ENCODE measurements at regions of chr1 and their contacts with region 1.

Region 1: GRCh38 chr1:222792744-222793143 is 22.1 kb upstream of the DISP1 start:
- DNase-seq: peak in 2 of 9 experiments; percentile 27 to 49
- ATAC-seq: no peak
- H3K4me3 ChIP-seq: no peak overlapping the region
- H3K4me3 Mint-ChIP-seq: no peak overlapping the region
- H3K27ac ChIP-seq: no peak overlapping the region
- H3K27ac Mint-ChIP-seq: no peak overlapping the region
- H3K4me1 ChIP-seq: no peaks in the 10 kb centered on the region
- H3K4me1 Mint-ChIP-seq: no peaks in the 10 kb centered on the region
- H3K27me3 ChIP-seq: no peaks in the 10 kb centered on the region
- H3K27me3 Mint-ChIP-seq: no peaks in the 10 kb centered on the region
- CTCF ChIP-seq: peak; percentile 62

Region 2: DNA sequence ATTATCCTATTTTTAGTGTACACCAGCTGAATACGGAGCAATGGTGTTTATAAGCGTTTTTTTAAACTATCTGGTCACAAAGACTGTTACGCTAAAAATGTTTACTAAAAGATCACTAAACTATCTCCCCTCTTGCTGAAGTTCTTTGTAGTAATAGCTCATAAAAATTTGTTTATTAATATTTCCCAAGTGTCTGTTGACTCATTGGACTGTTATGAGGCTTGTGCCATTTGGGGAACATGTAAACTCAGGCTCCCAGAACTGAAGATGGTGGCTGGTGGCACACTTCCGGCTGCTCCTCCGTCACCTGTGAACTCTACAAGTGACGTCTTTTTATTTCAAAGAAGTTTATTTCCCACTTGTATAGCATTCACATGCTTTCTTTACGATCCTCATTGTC is 126.8 kb before region 1 on chr1:
- CTCF ChIA-PET with region 1: no interaction called
- POLR2A ChIA-PET with region 1: no interaction called
- intact Hi-C with region 1: no loop called
- DNase-seq: no peak
- ATAC-seq: no peak
- H3K4me3 ChIP-seq: no peak overlapping the region
- H3K4me3 Mint-ChIP-seq: no peak overlapping the region
- H3K27ac ChIP-seq: no peak overlapping the region
- H3K27ac Mint-ChIP-seq: no peak overlapping the region
- H3K4me1 ChIP-seq: peaks cover 18% of the 10 kb centered on the region
- H3K4me1 Mint-ChIP-seq: peaks cover 21% of the 10 kb centered on the region
- H3K27me3 ChIP-seq: no peaks in the 10 kb centered on the region
- H3K27me3 Mint-ChIP-seq: no peaks in the 10 kb centered on the region
- CTCF ChIP-seq: no peak

Region 3: GRCh38 chr1:222706815-222707214 is 85.9 kb before region 1 on chr1:
- CTCF ChIA-PET with region 1: no interaction called
- POLR2A ChIA-PET with region 1: no interaction called
- intact Hi-C with region 1: no loop called
- DNase-seq: no peak
- ATAC-seq: no peak
- H3K4me3 ChIP-seq: no peak overlapping the region
- H3K4me3 Mint-ChIP-seq: no peak overlapping the region
- H3K27ac ChIP-seq: no peak overlapping the region
- H3K27ac Mint-ChIP-seq: no peak overlapping the region
- H3K4me1 ChIP-seq: peaks cover 34% of the 10 kb centered on the region
- H3K4me1 Mint-ChIP-seq: peaks cover 65% of the 10 kb centered on the region
- H3K27me3 ChIP-seq: no peaks in the 10 kb centered on the region
- H3K27me3 Mint-ChIP-seq: no peaks in the 10 kb centered on the region
- CTCF ChIP-seq: no peak

Region 4: DNA sequence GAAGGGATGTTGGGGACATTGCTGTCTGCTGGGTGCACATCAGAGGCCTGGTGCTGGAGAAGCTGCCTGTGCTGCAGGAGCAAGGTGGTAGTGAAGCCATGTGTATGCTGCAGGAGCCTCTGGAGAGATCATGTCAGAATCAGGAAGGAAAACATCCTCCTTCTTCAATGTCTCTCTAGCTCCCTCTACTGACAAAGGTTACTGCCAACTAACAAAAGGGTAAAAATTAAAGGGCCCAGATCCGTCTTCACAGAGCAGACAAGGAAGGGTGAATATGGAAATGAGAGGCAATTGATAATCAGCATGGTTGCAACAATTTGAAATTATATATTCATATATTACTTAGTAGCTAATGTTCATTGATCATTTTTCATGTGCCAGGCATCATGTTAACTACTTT is 23.6 kb before region 1 on chr1:
- CTCF ChIA-PET with region 1: no interaction called
- POLR2A ChIA-PET with region 1: no interaction called
- intact Hi-C with region 1: no loop called
- DNase-seq: no peak
- ATAC-seq: no peak
- H3K4me3 ChIP-seq: no peak overlapping the region
- H3K4me3 Mint-ChIP-seq: no peak overlapping the region
- H3K27ac ChIP-seq: no peak overlapping the region
- H3K27ac Mint-ChIP-seq: no peak overlapping the region
- H3K4me1 ChIP-seq: peaks cover 8% of the 10 kb centered on the region
- H3K4me1 Mint-ChIP-seq: peaks cover 14% of the 10 kb centered on the region
- H3K27me3 ChIP-seq: no peaks in the 10 kb centered on the region
- H3K27me3 Mint-ChIP-seq: no peaks in the 10 kb centered on the region
- CTCF ChIP-seq: no peak

Region 5: GRCh38 chr1:222987674-222988076 is 194.9 kb after region 1 on chr1:
- CTCF ChIA-PET with region 1: no interaction called
- POLR2A ChIA-PET with region 1: interaction called, 3 read pairs
- intact Hi-C with region 1: loop called in 1 of 2 experiments (anchors 10 kb)
- DNase-seq: no peak
- ATAC-seq: no peak
- H3K4me3 ChIP-seq: no peak overlapping the region
- H3K4me3 Mint-ChIP-seq: no peak overlapping the region
- H3K27ac ChIP-seq: no peak overlapping the region
- H3K27ac Mint-ChIP-seq: no peak overlapping the region
- H3K4me1 ChIP-seq: no peaks in the 10 kb centered on the region
- H3K4me1 Mint-ChIP-seq: peaks cover 8% of the 10 kb centered on the region
- H3K27me3 ChIP-seq: no peaks in the 10 kb centered on the region
- H3K27me3 Mint-ChIP-seq: no peaks in the 10 kb centered on the region
- CTCF ChIP-seq: no peak

Region 6: DNA sequence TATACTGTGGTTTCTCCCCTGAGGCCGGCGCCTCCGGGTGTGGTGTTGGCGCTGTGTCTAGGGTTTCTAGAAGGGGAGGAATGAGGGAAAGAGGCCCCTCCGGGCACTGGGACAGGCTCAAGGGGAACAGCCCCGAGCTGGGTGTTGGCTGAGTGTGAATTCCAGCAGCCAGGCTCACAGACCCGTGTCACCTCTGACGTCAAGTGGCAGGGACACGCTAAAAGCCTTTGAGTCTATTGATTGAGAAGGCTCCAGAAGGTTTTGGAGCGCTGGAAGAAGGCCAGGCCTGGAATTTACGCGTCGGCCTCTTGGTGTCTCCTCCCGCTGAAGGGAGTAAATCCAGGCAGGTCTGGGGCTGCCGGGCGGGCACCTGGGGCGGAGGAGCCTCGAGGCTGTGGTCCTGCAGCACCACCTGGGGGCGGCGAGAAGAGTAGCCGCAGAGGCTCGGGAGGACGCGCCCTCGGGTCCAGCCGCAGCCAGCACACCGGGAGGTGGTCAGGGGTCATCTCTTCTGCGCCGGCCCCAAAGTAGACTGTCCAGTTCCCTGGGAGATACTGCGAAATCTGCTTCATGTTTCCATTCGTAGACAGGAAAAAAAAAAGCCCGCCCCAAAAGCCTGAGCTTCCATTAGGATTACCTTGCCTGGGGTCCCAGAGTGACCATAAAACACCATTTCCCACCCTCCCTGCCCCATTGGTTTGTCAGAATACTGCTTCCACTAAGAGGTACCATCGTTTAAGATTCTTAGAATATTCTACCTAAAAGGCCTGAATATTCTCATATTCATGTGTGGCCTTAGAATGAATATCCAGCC is 288.6 kb after region 1 on chr1:
- CTCF ChIA-PET with region 1: interaction called, 4 read pairs
- POLR2A ChIA-PET with region 1: no interaction called
- intact Hi-C with region 1: loop called (anchors 1 kb)
- DNase-seq: peak; percentile 45 to 82 (median 70)
- ATAC-seq: peak; percentile 97
- H3K4me3 ChIP-seq: peak overlapping the region; percentile 45
- H3K4me3 Mint-ChIP-seq: peak overlapping the region; percentile 68
- H3K27ac ChIP-seq: peak overlapping the region in 1 of 2 experiments; percentile 16
- H3K27ac Mint-ChIP-seq: peak overlapping the region; percentile 41
- H3K4me1 ChIP-seq: peaks cover 4% of the 10 kb centered on the region
- H3K4me1 Mint-ChIP-seq: no peaks in the 10 kb centered on the region
- H3K27me3 ChIP-seq: peaks cover 0 to 3% of the 10 kb centered on the region in 2 experiments
- H3K27me3 Mint-ChIP-seq: peaks cover 2% of the 10 kb centered on the region
- CTCF ChIP-seq: peak; percentile 66

Region 7: GRCh38 chr1:223088713-223089240 is 296.0 kb after region 1 on chr1:
- CTCF ChIA-PET with region 1: interaction called, 14 read pairs
- POLR2A ChIA-PET with region 1: no interaction called
- intact Hi-C with region 1: no loop called
- DNase-seq: no peak
- ATAC-seq: no peak
- H3K4me3 ChIP-seq: no peak overlapping the region
- H3K4me3 Mint-ChIP-seq: no peak overlapping the region
- H3K27ac ChIP-seq: no peak overlapping the region
- H3K27ac Mint-ChIP-seq: no peak overlapping the region
- H3K4me1 ChIP-seq: peaks cover 6% of the 10 kb centered on the region
- H3K4me1 Mint-ChIP-seq: peaks cover 11% of the 10 kb centered on the region
- H3K27me3 ChIP-seq: no peaks in the 10 kb centered on the region
- H3K27me3 Mint-ChIP-seq: no peaks in the 10 kb centered on the region
- CTCF ChIP-seq: no peak

Region 8: DNA sequence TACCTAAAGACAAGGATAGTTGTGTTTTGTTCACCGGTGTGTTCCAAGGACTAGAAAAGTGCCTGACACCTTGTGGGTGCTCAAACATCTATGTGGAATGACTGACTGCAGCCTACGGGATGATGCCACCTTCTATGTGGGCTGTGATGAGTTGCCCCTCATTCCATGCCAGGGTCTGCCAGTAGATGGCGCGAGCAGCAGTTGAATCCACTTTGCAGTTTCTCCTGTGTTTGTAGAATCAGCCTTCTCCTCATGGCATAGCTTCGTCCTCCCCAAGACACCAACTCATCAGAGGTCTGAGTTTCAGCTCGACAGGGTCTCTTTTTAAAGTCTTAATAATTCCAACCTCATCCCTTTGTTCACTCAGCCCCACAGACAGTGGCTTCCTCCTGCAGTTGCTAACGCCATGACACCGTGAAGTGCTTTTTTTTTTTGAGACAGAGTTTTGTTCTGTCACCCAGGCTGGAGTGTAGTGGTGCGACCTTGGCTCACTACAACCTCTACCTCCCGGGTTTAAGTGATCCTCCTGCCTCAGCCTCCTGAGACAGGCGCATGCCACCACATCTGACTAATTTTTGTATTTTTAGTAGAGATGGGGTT is 739.1 kb after region 1 on chr1:
- CTCF ChIA-PET with region 1: no interaction called
- POLR2A ChIA-PET with region 1: no interaction called
- intact Hi-C with region 1: loop called in 1 of 2 experiments (anchors 5 kb)
- DNase-seq: peak in 7 of 9 experiments; percentile 11 to 56 (median 21)
- ATAC-seq: no peak
- H3K4me3 ChIP-seq: no peak overlapping the region
- H3K4me3 Mint-ChIP-seq: no peak overlapping the region
- H3K27ac ChIP-seq: no peak overlapping the region
- H3K27ac Mint-ChIP-seq: no peak overlapping the region
- H3K4me1 ChIP-seq: no peaks in the 10 kb centered on the region
- H3K4me1 Mint-ChIP-seq: no peaks in the 10 kb centered on the region
- H3K27me3 ChIP-seq: no peaks in the 10 kb centered on the region
- H3K27me3 Mint-ChIP-seq: peaks cover 11% of the 10 kb centered on the region
- CTCF ChIP-seq: peak; percentile 37

Region 9: GRCh38 chr1:223683586-223684487 is 891.1 kb after region 1 on chr1:
- CTCF ChIA-PET with region 1: interaction called, 3 read pairs
- POLR2A ChIA-PET with region 1: no interaction called
- intact Hi-C with region 1: loop called (anchors 1 to 2 kb)
- DNase-seq: peak; percentile 44 to 75 (median 67)
- ATAC-seq: peak; percentile 51
- H3K4me3 ChIP-seq: no peak overlapping the region
- H3K4me3 Mint-ChIP-seq: no peak overlapping the region
- H3K27ac ChIP-seq: no peak overlapping the region
- H3K27ac Mint-ChIP-seq: no peak overlapping the region
- H3K4me1 ChIP-seq: no peaks in the 10 kb centered on the region
- H3K4me1 Mint-ChIP-seq: peaks cover 3% of the 10 kb centered on the region
- H3K27me3 ChIP-seq: no peaks in the 10 kb centered on the region
- H3K27me3 Mint-ChIP-seq: peaks cover 13% of the 10 kb centered on the region
- CTCF ChIP-seq: peak; percentile 69

Region 10: DNA sequence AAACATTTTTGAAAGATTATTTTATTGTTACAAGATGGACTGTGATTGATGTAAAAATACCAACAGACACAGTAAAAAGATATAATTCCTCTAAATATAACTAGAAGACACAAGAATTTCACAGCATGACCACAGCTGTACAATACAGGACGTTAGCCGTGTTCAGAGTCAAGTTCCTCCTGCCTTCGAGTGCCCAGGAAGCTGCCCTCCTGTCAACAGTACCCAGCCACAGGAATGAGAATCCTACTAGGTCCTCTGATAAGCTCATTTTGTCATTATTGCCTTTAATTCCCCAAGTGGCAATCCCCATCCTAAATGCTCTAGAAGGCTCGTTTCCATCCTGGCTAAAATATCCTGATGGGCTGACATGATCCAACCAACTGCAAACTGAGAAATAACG is 903.2 kb after region 1 on chr1:
- CTCF ChIA-PET with region 1: interaction called, 3 read pairs
- POLR2A ChIA-PET with region 1: no interaction called
- intact Hi-C with region 1: loop called in 1 of 2 experiments (anchors 2 kb)
- DNase-seq: no peak
- ATAC-seq: no peak
- H3K4me3 ChIP-seq: no peak overlapping the region
- H3K4me3 Mint-ChIP-seq: no peak overlapping the region
- H3K27ac ChIP-seq: no peak overlapping the region
- H3K27ac Mint-ChIP-seq: no peak overlapping the region
- H3K4me1 ChIP-seq: peaks cover 7% of the 10 kb centered on the region
- H3K4me1 Mint-ChIP-seq: peaks cover 6% of the 10 kb centered on the region
- H3K27me3 ChIP-seq: no peaks in the 10 kb centered on the region
- H3K27me3 Mint-ChIP-seq: no peaks in the 10 kb centered on the region
- CTCF ChIP-seq: no peak

Measured in CD8-positive, alpha-beta T cell (primary cell).